PC-9 (cell line): ENCODE measurements at regions of chr2 and their contacts with region 1.

Region 1: DNA sequence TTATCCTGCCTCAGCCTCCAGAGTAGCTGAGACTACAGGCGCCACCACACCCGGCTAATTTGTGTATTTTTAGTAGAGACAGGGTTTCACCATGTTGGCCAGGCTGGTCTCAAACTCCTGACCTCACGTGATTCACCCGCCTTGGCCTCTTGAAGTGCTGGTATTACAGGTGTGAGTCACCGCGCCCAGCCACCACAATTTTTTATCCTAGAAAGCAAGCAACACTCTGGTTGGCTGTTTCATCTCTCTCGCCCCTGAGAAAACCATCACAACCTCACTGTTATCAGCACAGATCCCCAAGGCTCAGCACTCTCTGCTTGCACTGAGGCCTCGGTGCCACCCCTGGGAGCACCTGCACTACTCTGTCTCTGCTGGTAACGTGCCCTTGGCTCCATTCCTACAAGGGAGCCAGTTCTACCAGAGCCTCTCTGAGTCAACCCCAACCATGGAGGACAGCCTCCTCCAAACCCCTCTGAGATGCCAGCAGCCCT is 134.8 kb upstream of the AGAP1 start:
- DNase-seq: peak; percentile 91 to 96
- H3K4me3 ChIP-seq: no peak overlapping the region
- H3K27ac ChIP-seq: peak overlapping the region; percentile 23; the same call in 1 of the 2 replicates
- H3K4me1 ChIP-seq: peaks cover 28% of the 10 kb centered on the region
- H3K27me3 ChIP-seq: no peaks in the 10 kb centered on the region
- CTCF ChIP-seq: no peak

Region 2: GRCh38 chr2:234483568-234484251 is 875.3 kb before region 1 on chr2:
- CTCF ChIA-PET with region 1: no interaction called
- POLR2A ChIA-PET with region 1: no interaction called
- intact Hi-C with region 1: no loop called
- DNase-seq: peak in 1 of 2 experiments; percentile 18
- H3K4me3 ChIP-seq: no peak overlapping the region
- H3K27ac ChIP-seq: no peak overlapping the region
- H3K4me1 ChIP-seq: no peaks in the 10 kb centered on the region
- H3K27me3 ChIP-seq: no peaks in the 10 kb centered on the region
- CTCF ChIP-seq: no peak

Region 3: DNA sequence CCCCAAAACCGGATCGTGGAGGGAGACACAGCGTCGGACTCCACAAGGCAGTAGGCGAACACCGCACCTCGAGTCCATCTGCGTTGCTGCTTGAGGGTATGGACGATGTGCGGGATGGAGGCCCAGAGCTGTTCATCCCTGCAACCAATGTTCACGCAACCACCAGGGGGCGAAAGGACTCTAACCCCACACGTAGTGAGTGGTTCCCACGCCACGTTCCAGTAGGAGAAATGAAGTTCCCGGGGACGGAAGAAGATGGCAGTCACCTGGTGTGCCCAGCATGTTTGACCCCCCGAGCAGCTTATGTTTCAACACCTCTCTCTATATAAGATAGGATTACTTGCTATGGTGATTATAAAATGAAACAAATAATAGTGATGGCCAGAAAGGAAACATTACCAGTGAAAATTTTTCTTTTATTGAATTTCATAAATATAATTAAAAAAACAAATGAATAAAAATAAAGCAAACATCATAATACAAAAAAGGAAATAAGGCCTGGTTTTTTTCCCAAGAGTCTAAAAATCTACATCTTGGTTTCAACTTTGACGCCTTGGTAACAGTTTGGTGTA is 222.9 kb before region 1 on chr2:
- CTCF ChIA-PET with region 1: no interaction called
- POLR2A ChIA-PET with region 1: no interaction called
- intact Hi-C with region 1: loop called (anchors 5 kb)
- DNase-seq: peak; percentile 78 to 86
- H3K4me3 ChIP-seq: no peak overlapping the region
- H3K27ac ChIP-seq: no peak overlapping the region
- H3K4me1 ChIP-seq: no peaks in the 10 kb centered on the region
- H3K27me3 ChIP-seq: no peaks in the 10 kb centered on the region
- CTCF ChIP-seq: peak; percentile 94

Region 4: GRCh38 chr2:235314371-235314930 is 44.6 kb before region 1 on chr2:
- CTCF ChIA-PET with region 1: interaction called, 16 read pairs
- POLR2A ChIA-PET with region 1: no interaction called
- intact Hi-C with region 1: no loop called
- DNase-seq: no peak
- H3K4me3 ChIP-seq: no peak overlapping the region
- H3K27ac ChIP-seq: no peak overlapping the region
- H3K4me1 ChIP-seq: peaks cover 12% of the 10 kb centered on the region
- H3K27me3 ChIP-seq: no peaks in the 10 kb centered on the region
- CTCF ChIP-seq: no peak

Region 5: DNA sequence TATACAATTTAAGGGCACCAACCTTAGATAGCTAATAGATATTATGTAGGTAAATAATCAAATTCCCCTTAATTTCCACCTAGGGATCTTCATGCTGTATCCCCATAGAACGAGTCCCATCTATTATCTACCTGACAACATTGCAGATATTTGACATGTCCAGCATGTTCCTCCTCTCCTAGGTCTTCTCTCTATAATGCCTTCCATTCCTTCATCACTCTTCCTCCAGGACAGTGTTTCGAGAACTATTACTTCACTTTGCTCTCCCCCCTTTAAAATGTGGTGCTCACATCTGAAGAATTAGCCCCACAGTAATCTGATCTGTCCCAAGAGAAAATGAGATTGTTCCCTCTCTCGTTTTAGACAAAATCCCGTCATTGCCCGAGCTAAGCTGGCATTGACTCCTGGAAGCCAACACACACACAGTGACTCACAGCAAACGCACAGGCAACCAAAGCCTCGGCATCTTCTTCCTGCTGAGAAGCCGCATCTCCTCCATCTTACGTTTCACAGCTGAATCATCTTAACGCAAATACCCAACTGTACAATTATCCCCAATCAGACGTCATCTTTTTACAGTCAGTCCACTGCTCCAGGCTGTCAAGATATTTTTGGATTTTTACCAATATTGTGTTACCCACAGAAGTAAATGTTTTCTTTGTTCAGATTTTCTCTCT is 28.1 kb before region 1 on chr2:
- CTCF ChIA-PET with region 1: no interaction called
- POLR2A ChIA-PET with region 1: no interaction called
- intact Hi-C with region 1: loop called (anchors 2 kb)
- DNase-seq: peak; percentile 83 to 95
- H3K4me3 ChIP-seq: peak overlapping the region; percentile 20; the same call in 1 of the 2 replicates
- H3K27ac ChIP-seq: peak overlapping the region; percentile 46
- H3K4me1 ChIP-seq: peaks cover 19% of the 10 kb centered on the region
- H3K27me3 ChIP-seq: no peaks in the 10 kb centered on the region
- CTCF ChIP-seq: no peak

Region 6: GRCh38 chr2:235709124-235709813 is 350.2 kb after region 1 on chr2:
- CTCF ChIA-PET with region 1: no interaction called
- POLR2A ChIA-PET with region 1: no interaction called
- intact Hi-C with region 1: loop called (anchors 1 kb)
- DNase-seq: peak; percentile 99 to 100
- H3K4me3 ChIP-seq: peak overlapping the region; percentile 9; the same call in 1 of the 2 replicates
- H3K27ac ChIP-seq: peak overlapping the region; percentile 96
- H3K4me1 ChIP-seq: peaks cover 57% of the 10 kb centered on the region
- H3K27me3 ChIP-seq: no peaks in the 10 kb centered on the region
- CTCF ChIP-seq: no peak